Activated naive CD8-positive, alpha-beta T cell treated with anti-CD3 and anti-CD28 coated beads, Interleukin-2, amount 10 ng/mL, durations not matched to agents 7 days and 5 days (primary cell): ENCODE measurements at regions of chr12 and their contacts with region 1.

Region 1: DNA sequence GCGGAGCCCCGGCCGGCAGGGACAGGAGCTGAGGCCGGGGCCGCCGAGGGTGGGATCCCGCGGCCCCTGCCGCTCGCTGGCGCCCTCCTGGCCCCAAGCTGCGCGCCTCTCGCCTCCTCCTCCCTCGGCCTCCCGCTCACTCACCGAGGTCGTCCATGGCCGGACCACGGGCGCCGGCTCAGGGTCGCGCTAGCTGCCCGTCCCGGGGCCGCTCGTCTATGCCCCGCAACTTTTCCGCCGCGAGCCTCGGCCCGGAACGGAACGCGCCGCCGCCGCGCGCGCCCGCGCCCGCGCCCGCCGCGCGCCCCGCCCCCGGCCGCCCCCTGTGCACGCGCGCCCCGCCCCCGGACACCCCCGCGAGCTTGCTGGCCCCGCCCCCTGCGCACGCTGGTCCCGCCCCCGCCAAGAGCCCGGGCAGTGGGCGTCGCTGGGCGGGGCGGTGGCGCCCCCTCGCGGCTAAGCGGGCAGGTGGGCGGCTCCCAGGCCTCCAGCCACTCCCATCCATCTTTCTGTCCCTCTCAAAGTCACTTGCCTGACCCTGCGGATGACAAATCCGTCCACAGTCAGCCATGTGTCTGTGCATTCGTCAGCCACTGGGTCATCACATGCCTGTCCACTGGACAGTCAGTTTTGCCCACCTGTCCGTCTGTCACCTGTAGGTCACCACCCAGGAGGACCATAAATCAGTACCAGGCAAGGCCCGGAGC is at the start of gene PXN:
- DNase-seq: peak; percentile 98
- ATAC-seq: peak; percentile 83
- H3K4me3 Mint-ChIP-seq: peak within 1 kb of the TSS; percentile 91
- H3K27ac Mint-ChIP-seq: peak within 1 kb of the TSS; percentile 79
- H3K4me1 Mint-ChIP-seq: peaks cover 35% of the 10 kb centered on the region
- H3K27me3 Mint-ChIP-seq: no peaks in the 10 kb centered on the region
- total RNA-seq, gene PXN: 89.0 to 94.7 TPM

Region 2: DNA sequence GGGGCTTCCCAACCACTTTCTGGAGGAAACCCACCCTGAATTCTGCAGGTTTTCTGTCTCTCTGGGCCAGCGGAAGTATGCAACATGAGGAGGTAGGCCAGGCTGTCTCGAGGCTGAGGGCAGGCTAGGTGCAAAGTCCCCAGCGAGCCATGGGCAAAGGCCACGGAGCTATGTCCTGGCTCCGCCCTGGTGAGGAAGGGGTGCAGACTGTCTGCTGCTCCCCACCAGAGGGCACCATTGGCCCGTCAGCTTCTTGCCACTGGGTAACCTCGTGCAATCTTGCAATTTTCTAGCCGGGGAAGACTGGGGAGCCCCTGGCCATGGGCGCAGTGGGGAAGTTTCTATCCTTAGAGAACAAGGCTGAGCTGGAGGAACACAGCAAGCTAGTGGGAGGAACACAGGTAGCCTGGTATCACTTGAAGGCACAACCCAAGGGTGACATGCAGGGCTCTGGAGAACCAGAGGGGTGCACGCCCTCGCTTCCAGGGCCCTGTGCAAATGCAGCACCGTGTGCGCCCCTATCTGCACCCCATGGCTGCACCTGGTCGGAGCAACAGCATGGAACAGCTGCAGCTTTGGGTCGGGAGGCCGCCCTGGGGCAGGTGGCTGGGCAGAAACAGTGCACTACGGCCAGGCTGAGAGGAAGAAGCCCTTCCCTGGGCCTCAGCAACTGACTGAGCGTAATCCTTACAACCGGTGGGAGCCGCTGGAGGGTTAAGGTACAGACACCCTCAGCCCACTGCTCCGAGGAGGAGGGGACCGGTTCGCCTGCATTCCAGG is 37.1 kb before region 1 on chr12:
- POLR2A ChIA-PET with region 1: interaction called, 202 read pairs
- DNase-seq: peak; percentile 89
- ATAC-seq: peak; percentile 69
- H3K4me3 Mint-ChIP-seq: peak overlapping the region; percentile 58
- H3K27ac Mint-ChIP-seq: peak overlapping the region; percentile 51
- H3K4me1 Mint-ChIP-seq: peaks cover 65% of the 10 kb centered on the region
- H3K27me3 Mint-ChIP-seq: no peaks in the 10 kb centered on the region

Region 3: GRCh38 chr12:120234643-120235368 is 30.8 kb before region 1 on chr12:
- POLR2A ChIA-PET with region 1: interaction called, 202 read pairs
- DNase-seq: no peak
- ATAC-seq: no peak
- H3K4me3 Mint-ChIP-seq: no peak overlapping the region
- H3K27ac Mint-ChIP-seq: no peak overlapping the region
- H3K4me1 Mint-ChIP-seq: peaks cover 47% of the 10 kb centered on the region
- H3K27me3 Mint-ChIP-seq: no peaks in the 10 kb centered on the region

Region 4: GRCh38 chr12:120249875-120250795 is 15.5 kb before region 1 on chr12:
- POLR2A ChIA-PET with region 1: interaction called, 56 read pairs
- DNase-seq: peak; percentile 48
- ATAC-seq: peak; percentile 4
- H3K4me3 Mint-ChIP-seq: peak overlapping the region; percentile 80
- H3K27ac Mint-ChIP-seq: peak overlapping the region; percentile 90
- H3K4me1 Mint-ChIP-seq: peaks cover 59% of the 10 kb centered on the region
- H3K27me3 Mint-ChIP-seq: peaks cover 2% of the 10 kb centered on the region

Region 5: DNA sequence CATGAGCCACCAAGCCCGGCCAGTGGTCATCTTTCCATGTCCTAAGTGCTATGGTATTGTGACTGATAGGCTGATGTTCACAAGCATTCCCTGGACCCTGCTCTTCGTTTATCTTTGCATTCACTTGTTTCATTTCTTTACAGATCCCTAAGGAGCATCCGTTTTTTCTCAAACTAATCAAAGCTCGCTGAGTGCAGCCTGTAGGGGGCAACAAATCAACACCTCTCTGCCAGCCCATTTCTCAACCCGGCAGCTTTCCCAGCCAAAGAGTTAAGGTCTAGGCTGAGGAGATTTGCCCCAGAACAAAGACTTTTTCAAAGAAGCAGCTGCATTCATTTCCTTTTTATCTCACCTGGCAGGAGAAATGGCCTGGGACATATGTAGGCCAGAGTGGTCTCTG is 48.6 kb after region 1 on chr12:
- POLR2A ChIA-PET with region 1: no interaction called
- DNase-seq: no peak
- ATAC-seq: no peak
- H3K4me3 Mint-ChIP-seq: no peak overlapping the region
- H3K27ac Mint-ChIP-seq: no peak overlapping the region
- H3K4me1 Mint-ChIP-seq: peaks cover 8% of the 10 kb centered on the region
- H3K27me3 Mint-ChIP-seq: no peaks in the 10 kb centered on the region